Activated naive CD4-positive, alpha-beta T cell treated with anti-CD3 and anti-CD28 coated beads for 36 hours (primary cell): ENCODE measurements at regions of chr18 and their contacts with region 1.

Region 1: DNA sequence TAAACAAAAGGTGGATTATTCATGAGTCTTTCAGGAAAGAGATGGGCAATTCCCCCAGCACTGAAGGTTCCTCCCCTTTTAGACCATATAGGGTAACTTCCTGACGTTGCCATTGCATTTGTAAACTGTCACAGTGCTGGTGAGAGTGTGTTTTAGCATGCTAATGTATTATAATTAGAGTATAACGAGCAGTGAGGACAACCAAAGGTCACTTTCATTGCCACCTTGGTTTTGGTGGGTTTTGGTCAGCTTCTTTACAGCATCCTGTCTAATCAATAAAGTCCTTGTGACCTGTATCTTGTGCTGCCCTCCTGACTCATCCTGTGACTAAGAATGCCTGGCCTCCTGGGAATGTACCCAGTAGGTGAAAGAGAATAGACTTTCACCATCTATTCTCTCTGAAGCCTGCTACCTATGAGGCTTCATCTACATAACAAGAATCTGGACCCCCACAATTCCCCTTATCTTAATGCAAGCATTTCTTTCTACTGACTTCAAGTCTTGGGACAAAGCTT is 148.7 kb downstream of the CABLES1 start:
- DNase-seq: peak; percentile 66
- H3K4me3 Mint-ChIP-seq: no peak overlapping the region
- H3K27ac Mint-ChIP-seq: peak overlapping the region; percentile 75
- H3K4me1 Mint-ChIP-seq: peaks cover 16% of the 10 kb centered on the region
- H3K27me3 Mint-ChIP-seq: no peaks in the 10 kb centered on the region

Region 2: DNA sequence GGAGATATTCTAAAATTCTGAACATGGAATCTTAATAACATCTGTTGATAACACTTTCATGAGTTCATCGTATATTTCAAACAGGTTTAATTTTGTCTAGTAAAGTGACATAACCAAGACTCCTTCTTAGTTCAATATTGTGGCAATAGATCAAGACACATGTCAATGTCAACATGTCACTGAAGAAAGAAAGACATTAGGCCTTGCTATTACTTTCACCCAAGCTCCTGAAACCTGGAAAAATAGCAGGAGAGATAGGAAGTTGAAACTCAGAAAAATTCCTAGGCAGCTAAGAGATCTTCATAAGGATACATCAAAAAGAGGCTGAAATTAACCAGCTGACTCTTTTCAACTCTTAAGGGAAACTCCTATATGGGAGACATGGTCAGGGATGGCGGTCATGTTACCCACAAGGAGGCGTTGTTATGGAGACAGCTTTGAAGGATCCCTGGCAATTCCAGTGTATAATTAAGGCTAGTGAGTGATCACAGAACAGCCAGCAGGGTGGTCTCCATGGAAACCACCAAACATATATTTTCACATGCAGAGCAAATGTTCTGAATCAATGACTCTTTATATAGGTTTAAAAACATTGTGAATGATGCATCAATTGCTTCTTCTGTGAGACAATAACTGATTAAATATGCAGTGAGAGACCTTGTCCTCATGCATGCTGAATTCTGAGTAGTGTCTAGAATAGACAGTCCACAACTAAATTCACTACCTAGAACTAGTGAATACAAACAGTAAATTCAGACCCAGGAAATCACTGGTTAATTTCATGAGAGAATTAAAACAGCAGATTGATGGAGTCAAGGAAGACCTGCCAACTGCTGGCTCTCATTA is 53.8 kb after region 1 on chr18:
- CTCF ChIA-PET with region 1: no interaction called
- intact Hi-C with region 1: loop called (anchors 5 kb)
- DNase-seq: no peak
- H3K4me3 Mint-ChIP-seq: no peak overlapping the region
- H3K27ac Mint-ChIP-seq: no peak overlapping the region
- H3K4me1 Mint-ChIP-seq: peaks cover 17% of the 10 kb centered on the region
- H3K27me3 Mint-ChIP-seq: no peaks in the 10 kb centered on the region